Right ventricle myocardium inferior (tissue), 1 donor: ENCODE measurements at regions of chr1 and their contacts with region 1.

Region 1: GRCh38 chr1:8604041-8604945 is 213.1 kb downstream of the RERE start:
- DNase-seq: no peak
- ATAC-seq: no peak

Region 2: GRCh38 chr1:8525558-8526275 is 78.6 kb before region 1 on chr1:
- intact Hi-C with region 1: no loop called
- DNase-seq: peak; percentile 82
- ATAC-seq: peak; percentile 99

Region 3: DNA sequence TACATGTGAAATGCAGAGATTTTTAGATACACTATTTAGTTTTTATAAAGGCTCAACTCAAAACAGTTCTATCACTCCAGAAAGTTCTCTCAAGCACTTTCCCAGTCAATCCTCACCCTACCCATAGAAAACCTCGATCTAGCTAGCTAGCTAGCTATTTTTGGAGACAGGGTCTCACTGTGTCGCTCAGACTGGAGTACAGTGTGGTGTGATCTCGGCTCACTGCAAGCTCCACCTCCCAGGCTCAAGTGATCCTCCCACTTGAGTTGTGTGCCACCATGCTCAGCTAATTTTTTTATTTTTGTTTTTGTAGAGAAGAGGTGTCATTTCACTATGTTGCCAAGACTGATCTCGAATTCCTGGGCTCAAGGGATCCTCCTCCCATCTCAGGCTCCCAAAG is 23.7 kb before region 1 on chr1:
- intact Hi-C with region 1: no loop called
- DNase-seq: no peak
- ATAC-seq: peak; percentile 79

Region 4: DNA sequence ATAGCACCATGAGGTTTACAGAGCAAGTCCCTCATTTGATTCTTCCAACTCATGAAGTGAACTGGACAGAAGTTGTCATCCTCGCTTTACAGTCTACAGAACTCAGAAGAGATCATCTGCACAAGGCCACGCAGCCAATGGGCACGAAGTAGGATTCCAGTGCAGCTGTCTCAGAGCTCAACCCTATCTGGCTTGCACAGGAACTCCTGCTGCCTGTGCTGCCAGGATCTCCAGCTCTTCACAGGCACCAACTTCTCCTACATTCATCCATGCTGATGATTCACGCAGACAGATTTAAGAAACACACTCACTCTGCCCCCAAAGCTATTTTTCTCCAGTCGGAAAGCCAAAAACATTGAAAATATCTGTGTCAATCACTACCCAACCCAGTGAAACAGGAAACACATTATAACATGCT is 56.1 kb after region 1 on chr1:
- intact Hi-C with region 1: loop called (anchors 5 kb)
- DNase-seq: peak; percentile 59
- ATAC-seq: peak; percentile 87

Region 5: GRCh38 chr1:8746554-8746953 is 142.3 kb after region 1 on chr1:
- intact Hi-C with region 1: no loop called
- DNase-seq: no peak
- ATAC-seq: no peak